Breast epithelium (tissue), 4 donors: ENCODE measurements at regions of chr14 and their contacts with region 1.

Region 1: GRCh38 chr14:51660741-51661140 is 9.0 kb downstream of the FRMD6 start:
- DNase-seq: no peak
- H3K4me3 ChIP-seq: no peak overlapping the region
- H3K27ac ChIP-seq: peak overlapping the region; percentile 4
- H3K4me1 ChIP-seq: peaks cover 0 to 8% of the 10 kb centered on the region in 2 donors
- H3K27me3 ChIP-seq: no peaks in the 10 kb centered on the region
- CTCF ChIP-seq: no peak
- POLR2A ChIP-seq: no peak

Region 2: DNA sequence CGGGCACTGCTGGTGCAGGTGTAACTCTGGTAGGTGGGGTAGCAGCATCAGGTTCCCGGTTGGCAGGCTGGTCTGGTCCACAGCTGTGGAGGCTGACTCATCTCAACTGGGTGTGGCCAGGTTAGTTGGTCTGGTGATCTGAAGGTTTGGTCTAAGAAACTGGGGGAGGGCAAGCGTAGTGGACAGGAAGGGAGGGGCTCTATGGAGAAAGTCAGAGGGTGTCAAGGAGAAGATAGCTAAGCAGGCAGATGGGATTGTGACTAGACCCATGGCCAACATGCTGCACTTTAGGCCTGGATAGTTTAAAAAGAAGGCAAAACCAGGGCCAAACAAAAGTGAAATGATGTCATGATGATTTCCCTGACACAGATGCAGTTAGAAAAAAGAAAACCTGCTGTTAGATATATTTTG is 573.7 kb before region 1 on chr14:
- intact Hi-C with region 1: loop called (anchors 5 kb)
- DNase-seq: no peak
- H3K4me3 ChIP-seq: no peak overlapping the region
- H3K27ac ChIP-seq: no peak overlapping the region
- H3K4me1 ChIP-seq: no peaks in the 10 kb centered on the region
- H3K27me3 ChIP-seq: no peaks in the 10 kb centered on the region
- CTCF ChIP-seq: no peak
- POLR2A ChIP-seq: no peak

Region 3: GRCh38 chr14:52124791-52125661 is 464.3 kb after region 1 on chr14:
- intact Hi-C with region 1: no loop called
- DNase-seq: no peak
- H3K4me3 ChIP-seq: no peak overlapping the region
- H3K27ac ChIP-seq: peak overlapping the region in 1 of 2 donors; percentile 71
- H3K4me1 ChIP-seq: no peaks in the 10 kb centered on the region
- H3K27me3 ChIP-seq: no peaks in the 10 kb centered on the region
- CTCF ChIP-seq: no peak
- POLR2A ChIP-seq: no peak